PC-3 (cell line): ENCODE measurements at regions of chr16 and their contacts with region 1.

Region 1: GRCh38 chr16:29700253-29700987 is 21.4 kb downstream of the QPRT start:
- DNase-seq: peak; percentile 81
- ATAC-seq: peak; percentile 91
- H3K4me3 ChIP-seq: no peak overlapping the region
- H3K27ac ChIP-seq: no peak overlapping the region
- H3K4me1 ChIP-seq: no peaks in the 10 kb centered on the region
- H3K27me3 ChIP-seq: no peaks in the 10 kb centered on the region
- CTCF ChIP-seq: peak; percentile 68

Region 2: DNA sequence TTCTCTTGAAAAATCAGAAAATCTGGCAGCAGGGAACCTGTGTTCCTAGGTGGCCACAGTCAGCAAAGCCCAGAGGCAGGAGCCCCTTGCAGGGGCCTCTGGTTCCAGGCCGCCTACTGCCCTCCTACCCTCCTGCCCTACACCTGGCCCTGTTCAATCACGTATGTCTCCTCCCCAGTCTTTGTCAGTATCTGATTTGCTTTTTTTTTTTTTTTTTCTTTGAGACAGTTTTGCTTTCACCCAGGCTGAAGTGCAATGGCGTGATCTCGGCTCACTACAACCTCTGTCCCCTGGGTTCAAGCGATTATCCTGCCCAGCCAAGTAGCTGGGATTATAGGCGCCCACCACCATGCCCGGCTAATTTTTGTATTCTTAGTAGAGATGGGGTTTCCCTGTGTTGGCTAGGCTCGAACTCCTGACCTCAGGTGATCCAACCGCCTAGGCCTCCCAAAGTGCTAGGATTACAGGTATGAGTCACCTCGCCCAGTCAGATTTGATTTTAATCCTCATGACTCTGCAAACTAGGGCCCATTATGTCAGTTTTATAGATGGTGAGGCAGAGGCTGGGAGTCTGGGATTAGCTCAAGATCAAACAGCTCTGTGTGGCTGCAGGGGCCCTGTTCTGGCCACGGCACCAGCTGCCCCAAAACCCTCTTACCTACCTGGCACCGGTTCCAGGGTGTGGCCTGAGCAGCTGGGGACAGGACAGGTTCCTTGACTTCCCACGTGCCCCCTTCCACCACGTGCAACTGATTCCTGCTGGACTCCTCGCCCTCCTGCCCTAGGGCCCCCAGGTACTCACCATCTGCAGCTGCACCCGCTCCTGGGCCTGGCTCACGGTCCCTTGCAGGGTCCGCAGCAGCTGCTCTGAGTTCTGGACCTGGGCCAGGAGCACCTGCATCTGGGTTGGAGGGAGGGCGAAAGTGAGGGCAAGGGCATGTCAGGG is 790.1 kb before region 1 on chr16:
- CTCF ChIA-PET with region 1: interaction called, 10 read pairs
- POLR2A ChIA-PET with region 1: no interaction called
- intact Hi-C with region 1: no loop called
- DNase-seq: peak; percentile 78
- ATAC-seq: peak; percentile 68
- H3K4me3 ChIP-seq: no peak overlapping the region
- H3K27ac ChIP-seq: peak overlapping the region; percentile 90
- H3K4me1 ChIP-seq: peaks cover 8% of the 10 kb centered on the region
- H3K27me3 ChIP-seq: no peaks in the 10 kb centered on the region
- CTCF ChIP-seq: no peak

Region 3: DNA sequence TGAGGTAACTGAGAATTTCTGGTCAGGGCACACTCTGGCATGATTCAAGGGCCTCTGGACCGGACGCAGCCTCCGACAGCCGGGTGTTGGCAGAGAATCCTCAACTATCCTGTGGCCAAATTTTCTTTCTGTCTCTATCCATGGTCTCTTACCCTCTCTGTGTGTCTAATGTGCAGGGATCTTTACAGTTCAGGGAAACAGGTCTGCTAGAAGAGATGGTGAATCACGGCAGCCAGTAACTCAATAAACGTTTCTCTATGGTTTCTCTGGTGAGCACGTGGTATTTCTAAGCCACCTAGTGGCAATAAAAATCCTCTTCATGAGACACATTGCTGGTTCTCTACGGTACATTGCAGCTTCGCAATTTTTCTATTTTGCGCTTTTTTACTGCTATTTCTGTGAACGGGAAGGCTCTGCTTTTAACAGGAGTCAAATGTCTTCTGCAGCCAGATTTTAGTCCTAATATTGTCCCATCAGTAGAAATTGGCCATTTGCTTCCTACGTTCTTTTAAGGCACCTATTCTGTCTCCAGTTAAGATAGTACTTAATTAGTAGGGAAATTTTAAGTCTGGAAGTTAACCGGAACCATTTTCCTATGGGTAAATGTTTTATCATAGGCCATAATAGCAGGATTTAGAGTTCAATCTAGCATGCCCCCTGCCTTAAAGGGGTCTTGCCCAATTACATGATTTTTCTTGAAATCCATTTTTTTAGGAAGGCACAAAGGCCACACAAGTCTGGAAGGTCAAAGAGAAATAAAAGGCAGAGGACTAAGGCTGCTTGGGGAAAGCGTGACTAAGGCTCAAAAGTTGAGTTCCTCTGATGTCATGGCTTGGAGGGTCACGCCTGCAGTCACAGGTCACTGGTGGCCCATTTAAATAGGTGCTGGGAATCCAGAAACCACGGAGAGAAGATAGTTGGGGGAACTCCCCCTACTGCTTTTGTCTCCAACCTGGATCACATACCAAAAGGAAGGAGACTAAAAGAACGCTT is 10.1 kb after region 1 on chr16:
- CTCF ChIA-PET with region 1: no interaction called
- POLR2A ChIA-PET with region 1: no interaction called
- intact Hi-C with region 1: loop called (anchors 1 kb)
- DNase-seq: peak; percentile 68
- ATAC-seq: peak; percentile 79
- H3K4me3 ChIP-seq: no peak overlapping the region
- H3K27ac ChIP-seq: no peak overlapping the region
- H3K4me1 ChIP-seq: no peaks in the 10 kb centered on the region
- H3K27me3 ChIP-seq: no peaks in the 10 kb centered on the region
- CTCF ChIP-seq: peak; percentile 65

Region 4: GRCh38 chr16:29805378-29806098 is 105.1 kb after region 1 on chr16:
- CTCF ChIA-PET with region 1: interaction called, 7 read pairs
- POLR2A ChIA-PET with region 1: no interaction called
- intact Hi-C with region 1: loop called (anchors 5 kb)
- DNase-seq: peak; percentile 93
- ATAC-seq: peak; percentile 45
- H3K4me3 ChIP-seq: peak overlapping the region; percentile 68
- H3K27ac ChIP-seq: peak overlapping the region; percentile 75
- H3K4me1 ChIP-seq: peaks cover 30% of the 10 kb centered on the region
- H3K27me3 ChIP-seq: no peaks in the 10 kb centered on the region
- CTCF ChIP-seq: no peak

Region 5: GRCh38 chr16:30024451-30024850 is 324.0 kb after region 1 on chr16:
- CTCF ChIA-PET with region 1: interaction called, 5 read pairs
- POLR2A ChIA-PET with region 1: no interaction called
- intact Hi-C with region 1: loop called (anchors 5 kb)
- DNase-seq: no peak
- ATAC-seq: no peak
- H3K4me3 ChIP-seq: no peak overlapping the region
- H3K27ac ChIP-seq: no peak overlapping the region
- H3K4me1 ChIP-seq: no peaks in the 10 kb centered on the region
- H3K27me3 ChIP-seq: no peaks in the 10 kb centered on the region
- CTCF ChIP-seq: no peak